Activated B cell treated with CpG ODN at 0.5 μM for 24 hours (primary cell): ENCODE measurements at regions of chr4 and their contacts with region 1.

Region 1: GRCh38 chr4:113761620-113762185 is at the start of gene CAMK2D:
- DNase-seq: peak; percentile 76
- ATAC-seq: peak; percentile 36
- H3K4me3 Mint-ChIP-seq: peak within 1 kb of the TSS; percentile 99
- H3K27ac Mint-ChIP-seq: peak within 1 kb of the TSS; percentile 100
- H3K4me1 Mint-ChIP-seq: peaks cover 42% of the 10 kb centered on the region
- H3K27me3 Mint-ChIP-seq: no peaks in the 10 kb centered on the region
- CTCF ChIP-seq: no peak
- total RNA-seq, gene CAMK2D: 62.7 and 72.9 TPM in 2 replicates

Region 2: DNA sequence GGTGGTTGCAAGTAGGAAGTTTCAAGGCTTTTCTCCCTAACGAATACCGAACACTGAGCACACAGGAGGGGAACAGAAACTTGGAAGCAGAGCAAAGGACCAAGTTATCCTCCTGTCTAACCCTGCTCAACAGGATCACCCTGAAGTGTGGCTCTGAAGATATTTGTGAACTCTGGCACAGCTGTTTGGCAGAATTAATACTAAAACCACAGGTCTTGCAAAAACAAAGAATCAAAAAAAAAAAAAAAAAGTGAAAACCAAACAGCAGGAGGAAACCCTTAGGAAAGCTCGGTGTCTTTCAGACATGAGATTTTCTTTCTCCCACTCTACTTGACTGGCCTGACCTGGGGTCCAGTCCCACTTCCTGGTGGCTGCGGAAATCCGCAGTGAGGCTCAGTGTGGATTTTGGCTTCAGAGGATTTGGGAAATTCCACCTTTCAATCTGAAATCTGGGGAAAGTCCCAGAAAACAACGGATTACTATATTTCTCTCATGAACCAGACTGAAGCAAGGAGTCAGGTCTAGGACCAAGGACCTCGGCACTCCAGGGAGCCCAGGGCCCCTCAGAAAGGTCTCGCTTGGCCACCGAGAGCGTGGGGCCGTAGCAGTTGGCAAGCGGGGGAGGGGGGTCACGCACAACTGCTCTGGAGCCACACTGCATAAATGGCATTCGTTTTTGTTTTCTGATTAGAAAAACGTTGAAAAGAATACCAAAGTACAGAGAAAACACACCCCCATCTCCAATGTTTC is 1476.9 kb before region 1 on chr4:
- CTCF ChIA-PET with region 1: no interaction called
- POLR2A ChIA-PET with region 1: no interaction called
- intact Hi-C with region 1: loop called (anchors 5 kb)
- DNase-seq: no peak
- ATAC-seq: peak; percentile 13
- H3K4me3 Mint-ChIP-seq: peak overlapping the region; percentile 98
- H3K27ac Mint-ChIP-seq: peak overlapping the region; percentile 98
- H3K4me1 Mint-ChIP-seq: peaks cover 88% of the 10 kb centered on the region
- H3K27me3 Mint-ChIP-seq: no peaks in the 10 kb centered on the region
- CTCF ChIP-seq: no peak

Region 3: GRCh38 chr4:113547487-113548042 is 214.1 kb before region 1 on chr4:
- CTCF ChIA-PET with region 1: interaction called, 25 read pairs
- POLR2A ChIA-PET with region 1: interaction called, 86 read pairs
- intact Hi-C with region 1: loop called (anchors 1 kb)
- DNase-seq: peak; percentile 62
- ATAC-seq: peak; percentile 98
- H3K4me3 Mint-ChIP-seq: no peak overlapping the region
- H3K27ac Mint-ChIP-seq: peak overlapping the region; percentile 69
- H3K4me1 Mint-ChIP-seq: peaks cover 23% of the 10 kb centered on the region
- H3K27me3 Mint-ChIP-seq: no peaks in the 10 kb centered on the region
- CTCF ChIP-seq: peak; percentile 67

Region 4: DNA sequence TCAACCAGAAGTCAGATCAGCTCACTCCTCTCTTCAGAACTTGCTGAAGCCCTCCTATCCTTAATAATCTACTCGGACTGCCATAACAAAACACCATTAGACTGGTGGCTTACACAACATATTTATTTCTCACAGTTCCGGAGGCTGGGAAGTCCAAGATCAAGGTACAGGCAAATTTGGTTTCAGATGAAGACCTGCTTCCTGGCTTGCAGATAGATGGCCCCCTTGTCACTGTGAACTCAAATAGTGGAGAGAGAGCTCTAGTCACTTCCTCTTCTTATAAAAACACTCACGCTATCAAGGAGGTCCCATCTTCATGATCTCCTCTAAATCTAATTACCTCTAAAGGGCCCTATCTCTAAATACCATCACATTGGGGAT is 125.3 kb before region 1 on chr4:
- CTCF ChIA-PET with region 1: interaction called, 4 read pairs
- POLR2A ChIA-PET with region 1: interaction called, 20 read pairs
- intact Hi-C with region 1: loop called (anchors 1 kb)
- DNase-seq: no peak
- ATAC-seq: peak; percentile 73
- H3K4me3 Mint-ChIP-seq: peak overlapping the region; percentile 49
- H3K27ac Mint-ChIP-seq: peak overlapping the region; percentile 88
- H3K4me1 Mint-ChIP-seq: peaks cover 76% of the 10 kb centered on the region
- H3K27me3 Mint-ChIP-seq: no peaks in the 10 kb centered on the region
- CTCF ChIP-seq: no peak

Region 5: GRCh38 chr4:113727802-113728201 is 33.9 kb before region 1 on chr4:
- CTCF ChIA-PET with region 1: no interaction called
- POLR2A ChIA-PET with region 1: no interaction called
- intact Hi-C with region 1: no loop called
- DNase-seq: no peak
- ATAC-seq: no peak
- H3K4me3 Mint-ChIP-seq: no peak overlapping the region
- H3K27ac Mint-ChIP-seq: no peak overlapping the region
- H3K4me1 Mint-ChIP-seq: peaks cover 56% of the 10 kb centered on the region
- H3K27me3 Mint-ChIP-seq: no peaks in the 10 kb centered on the region
- CTCF ChIP-seq: no peak

Region 6: DNA sequence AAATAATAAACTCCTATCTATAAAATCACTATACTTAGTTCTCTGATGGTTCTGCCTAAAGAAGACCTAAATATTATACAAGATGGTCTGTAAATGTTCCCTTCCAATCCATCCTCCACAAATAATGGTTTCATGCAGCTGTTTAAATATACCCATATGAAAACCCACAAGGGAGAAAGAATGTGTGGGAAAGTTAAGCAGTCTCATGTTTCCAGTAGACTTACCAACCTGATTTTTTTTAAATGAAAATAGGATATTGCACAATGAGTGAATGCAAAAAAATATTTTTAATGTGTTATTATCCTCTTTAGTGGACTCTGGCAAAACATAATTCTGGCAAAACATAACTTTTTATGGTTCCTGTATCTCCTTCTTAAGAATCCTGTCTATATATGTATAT is 23.5 kb before region 1 on chr4:
- CTCF ChIA-PET with region 1: no interaction called
- POLR2A ChIA-PET with region 1: interaction called, 11 read pairs
- intact Hi-C with region 1: loop called (anchors 2 kb)
- DNase-seq: no peak
- ATAC-seq: no peak
- H3K4me3 Mint-ChIP-seq: no peak overlapping the region
- H3K27ac Mint-ChIP-seq: peak overlapping the region; percentile 44
- H3K4me1 Mint-ChIP-seq: peaks cover 66% of the 10 kb centered on the region
- H3K27me3 Mint-ChIP-seq: no peaks in the 10 kb centered on the region
- CTCF ChIP-seq: no peak

Region 7: GRCh38 chr4:113749178-113749577 is 12.5 kb before region 1 on chr4:
- CTCF ChIA-PET with region 1: no interaction called
- POLR2A ChIA-PET with region 1: no interaction called
- intact Hi-C with region 1: no loop called
- DNase-seq: no peak
- ATAC-seq: no peak
- H3K4me3 Mint-ChIP-seq: no peak overlapping the region
- H3K27ac Mint-ChIP-seq: no peak overlapping the region
- H3K4me1 Mint-ChIP-seq: peaks cover 39% of the 10 kb centered on the region
- H3K27me3 Mint-ChIP-seq: no peaks in the 10 kb centered on the region
- CTCF ChIP-seq: no peak

Region 8: DNA sequence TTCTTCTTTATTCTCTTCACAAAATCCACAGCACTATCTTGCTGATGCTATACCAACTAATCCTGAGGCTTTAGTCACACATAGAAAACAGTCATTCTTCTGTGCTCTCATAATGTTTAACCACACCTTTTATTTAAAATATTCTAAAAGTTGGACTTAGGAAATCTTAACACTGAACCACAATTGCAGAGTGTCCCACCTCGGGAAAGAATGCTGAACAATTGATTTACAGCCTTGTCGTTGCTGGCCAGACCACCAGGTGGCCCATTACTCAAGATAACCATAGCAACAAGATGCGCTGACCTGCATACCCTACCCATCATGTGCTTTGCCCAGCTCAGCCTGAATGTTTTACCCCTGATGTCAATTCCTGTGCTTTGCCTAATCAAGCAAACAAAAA is 117.0 kb after region 1 on chr4:
- CTCF ChIA-PET with region 1: no interaction called
- POLR2A ChIA-PET with region 1: no interaction called
- intact Hi-C with region 1: loop called (anchors 2 kb)
- DNase-seq: no peak
- ATAC-seq: no peak
- H3K4me3 Mint-ChIP-seq: no peak overlapping the region
- H3K27ac Mint-ChIP-seq: no peak overlapping the region
- H3K4me1 Mint-ChIP-seq: no peaks in the 10 kb centered on the region
- H3K27me3 Mint-ChIP-seq: no peaks in the 10 kb centered on the region
- CTCF ChIP-seq: no peak